ENCODE measurements at regions of chr19 and their contacts with region 1.

Region 1: DNA sequence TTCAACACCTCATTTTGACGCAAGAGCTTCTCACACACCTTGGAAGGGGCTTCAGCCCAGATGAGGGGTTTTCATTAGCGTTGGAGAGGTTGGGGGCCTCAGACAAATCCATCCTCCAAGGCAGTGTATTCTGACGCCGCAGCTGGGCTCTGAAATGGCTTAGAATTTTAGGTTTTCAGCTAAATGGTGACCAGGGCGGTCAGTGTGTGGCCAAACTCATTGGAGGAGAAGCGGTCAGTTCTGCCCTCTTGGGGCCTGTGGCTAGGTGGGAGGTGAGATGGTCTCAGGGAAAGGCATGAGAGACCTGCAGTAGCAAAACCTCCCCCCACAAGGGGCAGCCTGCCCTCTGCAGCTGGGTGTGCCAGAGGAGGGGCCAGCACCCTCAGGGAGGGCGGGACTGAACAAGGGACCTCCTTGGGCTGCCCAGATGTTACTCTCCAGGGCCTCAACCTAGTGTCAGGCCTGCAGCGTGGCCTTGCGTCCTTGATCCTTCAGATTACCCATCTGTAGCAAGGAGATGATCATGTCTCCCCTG is 155.8 kb downstream of the URI1 start:
- DNase-seq: peak; percentile 46

Region 2: GRCh38 chr19:30066781-30067759 is 30.7 kb before region 1 on chr19:
- intact Hi-C with region 1: loop called in 1 of 2 experiments (anchors 1 kb)
- DNase-seq: peak; percentile 64

Measured in posterior vena cava (tissue), 2 donors.